ENCODE measurements at regions of chr17 and their contacts with region 1.

Region 1: DNA sequence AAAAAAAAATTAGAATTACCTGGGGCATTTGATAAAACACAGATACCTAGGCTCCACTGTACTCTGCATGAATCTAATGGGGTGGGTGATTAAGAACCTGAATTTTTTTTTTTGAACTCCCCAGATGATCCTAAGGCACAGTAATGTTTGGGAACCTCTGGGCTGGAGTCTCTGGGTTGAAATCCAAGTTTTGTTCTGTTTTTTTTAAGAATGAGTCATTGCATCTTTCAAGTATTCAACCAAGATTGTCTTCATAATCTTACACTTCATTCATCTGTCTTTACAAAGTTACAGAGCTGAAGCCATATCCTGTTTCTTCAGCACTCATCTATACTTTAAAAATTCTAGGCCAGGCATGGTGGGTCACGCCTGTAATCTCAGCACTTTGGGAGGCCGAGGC is 52.6 kb downstream of the PIGL start:
- DNase-seq: no peak
- ATAC-seq: no peak
- H3K4me3 ChIP-seq: no peak overlapping the region
- H3K4me3 Mint-ChIP-seq: no peak overlapping the region
- H3K27ac ChIP-seq: no peak overlapping the region
- H3K27ac Mint-ChIP-seq: peak overlapping the region; percentile 63
- H3K4me1 ChIP-seq: peaks cover 21% of the 10 kb centered on the region
- H3K4me1 Mint-ChIP-seq: peaks cover 34% of the 10 kb centered on the region
- H3K27me3 ChIP-seq: no peaks in the 10 kb centered on the region
- H3K27me3 Mint-ChIP-seq: no peaks in the 10 kb centered on the region
- CTCF ChIP-seq: no peak

Region 2: DNA sequence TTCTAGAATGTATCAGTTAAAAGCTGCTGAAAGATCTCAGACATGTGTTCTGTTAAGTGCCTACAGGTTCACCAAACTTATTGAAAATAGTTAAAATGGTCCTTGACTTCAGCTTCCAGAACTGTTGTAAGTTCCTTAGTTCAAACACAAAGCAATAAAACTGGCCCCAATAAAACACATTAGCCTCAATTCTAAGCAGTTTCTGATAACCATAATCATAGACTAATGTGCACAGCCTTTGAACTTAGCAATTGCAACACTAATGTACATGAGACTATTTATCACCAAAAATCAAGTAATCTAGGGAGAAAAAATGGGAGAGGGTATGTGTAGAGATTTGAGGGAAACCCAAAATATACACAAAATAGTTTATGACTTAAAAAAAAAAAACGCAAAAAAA is 37.3 kb before region 1 on chr17:
- CTCF ChIA-PET with region 1: no interaction called
- POLR2A ChIA-PET with region 1: no interaction called
- intact Hi-C with region 1: loop called in 1 of 2 experiments (anchors 5 kb)
- DNase-seq: no peak
- ATAC-seq: no peak
- H3K4me3 ChIP-seq: no peak overlapping the region
- H3K4me3 Mint-ChIP-seq: no peak overlapping the region
- H3K27ac ChIP-seq: no peak overlapping the region
- H3K27ac Mint-ChIP-seq: no peak overlapping the region
- H3K4me1 ChIP-seq: peaks cover 8% of the 10 kb centered on the region
- H3K4me1 Mint-ChIP-seq: peaks cover 18% of the 10 kb centered on the region
- H3K27me3 ChIP-seq: no peaks in the 10 kb centered on the region
- H3K27me3 Mint-ChIP-seq: no peaks in the 10 kb centered on the region
- CTCF ChIP-seq: no peak

Region 3: DNA sequence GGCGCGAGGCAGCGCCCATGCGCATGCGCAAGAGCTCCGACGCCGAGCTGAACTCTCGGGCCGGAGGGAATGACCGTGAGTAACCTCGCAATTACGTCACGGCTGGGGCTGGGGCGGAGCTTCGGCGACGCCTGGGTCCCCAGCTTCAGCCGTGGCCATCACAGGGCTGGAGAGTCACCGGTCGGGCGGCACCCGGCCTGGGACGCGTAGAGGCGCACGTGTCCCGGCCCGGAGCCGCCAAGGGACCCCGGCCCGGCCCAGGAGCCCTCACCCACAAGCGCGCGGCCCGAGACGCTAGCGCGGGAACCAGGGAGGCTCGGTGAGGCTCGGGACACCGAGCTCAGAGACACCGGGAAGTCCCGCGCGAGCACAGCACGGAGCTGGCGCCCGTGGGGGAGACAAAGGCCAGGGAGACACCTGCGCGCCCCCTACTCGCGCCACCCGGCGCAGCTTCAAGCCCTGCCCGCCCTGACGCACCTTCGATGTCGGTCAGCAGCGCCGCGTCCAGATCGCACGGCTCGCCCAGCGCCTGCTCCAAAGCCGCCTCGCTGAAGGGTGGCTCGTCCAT is 1566.7 kb after region 1 on chr17:
- CTCF ChIA-PET with region 1: no interaction called
- POLR2A ChIA-PET with region 1: no interaction called
- intact Hi-C with region 1: no loop called
- DNase-seq: peak; percentile 94 to 99 (median 97)
- ATAC-seq: peak; percentile 72
- H3K4me3 ChIP-seq: peak overlapping the region; percentile 87 to 95
- H3K4me3 Mint-ChIP-seq: peak overlapping the region; percentile 88
- H3K27ac ChIP-seq: peak overlapping the region; percentile 99
- H3K27ac Mint-ChIP-seq: peak overlapping the region; percentile 97
- H3K4me1 ChIP-seq: peaks cover 82% of the 10 kb centered on the region
- H3K4me1 Mint-ChIP-seq: peaks cover 75% of the 10 kb centered on the region
- H3K27me3 ChIP-seq: no peaks in the 10 kb centered on the region
- H3K27me3 Mint-ChIP-seq: no peaks in the 10 kb centered on the region
- CTCF ChIP-seq: no peak